HCT116 (cell line): ENCODE measurements at regions of chr19 and their contacts with region 1.

Region 1: GRCh38 chr19:39554701-39555311 is 14.8 kb upstream of the EID2 start:
- DNase-seq: no peak
- ATAC-seq: no peak
- H3K4me3 ChIP-seq: no peak overlapping the region
- H3K27ac ChIP-seq: no peak overlapping the region
- H3K4me1 ChIP-seq: peaks cover 0 to 3% of the 10 kb centered on the region in 2 experiments; a peak in 1 of 4 replicates
- H3K27me3 ChIP-seq: peaks cover 31% of the 10 kb centered on the region
- CTCF ChIP-seq: no peak
- POLR2A ChIP-seq: no peak
- RAD21 ChIP-seq: no peak

Region 2: DNA sequence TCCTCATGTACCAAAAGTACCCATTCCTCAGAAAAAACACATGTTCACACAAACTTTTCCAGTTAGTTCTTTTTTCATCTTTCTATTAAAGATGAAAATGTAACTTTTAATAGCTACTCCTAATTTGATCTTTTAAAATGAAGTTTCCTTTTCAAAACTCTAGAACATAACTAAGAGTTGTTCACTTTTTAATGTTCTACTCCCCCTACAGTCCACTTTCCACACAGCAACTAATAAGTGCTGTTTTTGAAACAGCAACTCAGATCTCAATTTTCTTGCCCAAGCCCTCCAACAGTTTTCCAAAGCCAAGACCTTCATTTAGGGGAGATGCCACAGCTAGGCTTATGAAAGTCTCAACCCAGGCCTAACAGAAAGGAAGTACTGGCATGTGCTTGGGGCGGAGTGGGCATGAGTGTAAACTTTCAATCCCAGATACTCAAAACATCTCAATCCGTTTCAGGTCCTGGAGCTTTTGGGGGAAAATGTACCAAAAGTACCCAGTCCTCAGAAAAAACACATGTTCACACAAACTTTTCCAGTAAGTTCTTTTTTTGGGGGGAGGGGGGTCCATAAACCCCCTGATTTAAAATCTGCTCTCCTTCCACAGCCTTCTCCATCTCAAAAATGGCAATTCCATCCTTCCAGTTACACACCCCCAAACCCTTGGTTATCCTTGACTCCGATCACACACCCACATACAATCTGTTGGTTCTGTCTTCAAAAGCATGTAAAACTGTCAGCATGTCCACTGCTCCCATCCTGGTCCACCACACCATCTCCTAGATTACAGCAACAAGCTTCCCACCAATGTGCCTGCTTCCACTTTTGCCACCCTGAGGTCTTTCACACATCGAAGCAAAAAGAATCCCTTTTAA is 289.4 kb after region 1 on chr19:
- CTCF ChIA-PET with region 1: no interaction called
- POLR2A ChIA-PET with region 1: no interaction called
- RAD21 ChIA-PET with region 1: no interaction called
- intact Hi-C with region 1: loop called (anchors 5 kb)
- DNase-seq: no peak
- ATAC-seq: no peak
- H3K4me3 ChIP-seq: peak overlapping the region; percentile 94 to 97
- H3K27ac ChIP-seq: 0 out of 2 replicates have a peak overlapping the region, but pooled peaks have one; percentile 73
- H3K4me1 ChIP-seq: peaks cover 28 to 39% of the 10 kb centered on the region in 2 experiments
- H3K27me3 ChIP-seq: no peaks in the 10 kb centered on the region
- CTCF ChIP-seq: peak; percentile 43 to 73 (median 62); a peak in 5 of 6 replicates
- POLR2A ChIP-seq: no peak
- RAD21 ChIP-seq: peak; percentile 48